Activated T-helper 2 cell treated with anti-CD3 and anti-CD28 coated beads, Interferon-gamma antibody, Interleukin-2, Interleukin-4, amounts not matched to agents 10 μg/mL and 5 μg/mL and 100 μg/mL, durations not matched to agents 14 hours and 24 hours and 36 hours (primary cell): ENCODE measurements at regions of chr13 and their contacts with region 1.

Region 1: GRCh38 chr13:44917589-44918325 is 71.5 kb downstream of the NUFIP1 start:
- DNase-seq: peak; percentile 94
- H3K4me3 Mint-ChIP-seq: no peak overlapping the region
- H3K27ac Mint-ChIP-seq: no peak overlapping the region
- H3K4me1 Mint-ChIP-seq: no peaks in the 10 kb centered on the region
- H3K27me3 Mint-ChIP-seq: no peaks in the 10 kb centered on the region

Region 2: DNA sequence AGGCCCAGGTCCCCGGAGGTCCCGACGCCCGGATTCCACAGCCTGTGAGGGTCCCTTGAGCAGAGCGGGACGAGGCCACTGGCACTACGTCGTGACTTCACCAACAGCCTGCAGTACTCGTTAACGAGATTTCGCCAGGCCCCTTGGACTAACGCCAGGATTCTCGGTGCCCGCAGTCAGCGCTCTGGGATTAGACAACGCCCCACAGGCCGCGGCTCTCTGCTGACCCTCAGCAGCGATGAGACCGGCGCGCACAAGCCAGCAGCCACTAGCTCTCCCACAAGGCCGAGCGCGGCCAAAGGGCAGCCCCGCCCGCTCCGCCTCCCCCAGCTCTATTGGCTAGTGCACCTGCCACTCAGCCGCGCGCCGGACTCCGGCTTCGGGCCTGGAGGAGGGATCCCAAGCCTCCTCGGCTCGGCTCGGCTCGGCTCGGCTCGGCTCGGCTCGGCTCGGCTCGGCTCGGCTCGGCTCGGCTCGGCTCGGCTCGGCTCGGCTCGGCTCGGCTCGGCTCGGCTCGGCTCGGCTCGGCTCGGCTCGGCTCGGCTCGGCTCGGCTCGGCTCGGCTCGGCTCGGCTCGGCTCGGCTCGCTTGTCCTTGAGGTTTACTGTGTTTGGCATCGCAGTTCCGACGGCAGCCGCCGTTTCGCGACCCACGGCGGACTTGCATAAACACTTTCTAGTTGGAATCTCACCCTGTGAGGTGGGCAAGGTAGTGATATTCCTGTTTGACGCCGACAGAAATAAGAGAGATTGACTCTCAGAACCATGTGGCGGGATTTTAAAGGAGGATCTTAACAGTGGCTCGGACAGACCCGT is 775.8 kb before region 1 on chr13:
- intact Hi-C with region 1: loop called (anchors 5 kb)
- DNase-seq: peak; percentile 93
- H3K4me3 Mint-ChIP-seq: peak overlapping the region; percentile 84
- H3K27ac Mint-ChIP-seq: peak overlapping the region; percentile 67
- H3K4me1 Mint-ChIP-seq: peaks cover 24% of the 10 kb centered on the region
- H3K27me3 Mint-ChIP-seq: peaks cover 51% of the 10 kb centered on the region

Region 3: GRCh38 chr13:44577236-44578066 is 340.3 kb before region 1 on chr13:
- intact Hi-C with region 1: loop called (anchors 1 kb)
- DNase-seq: peak; percentile 91
- H3K4me3 Mint-ChIP-seq: peak overlapping the region; percentile 88
- H3K27ac Mint-ChIP-seq: peak overlapping the region; percentile 79
- H3K4me1 Mint-ChIP-seq: peaks cover 18% of the 10 kb centered on the region
- H3K27me3 Mint-ChIP-seq: peaks cover 44% of the 10 kb centered on the region

Region 4: GRCh38 chr13:44758630-44759383 is 158.9 kb before region 1 on chr13:
- intact Hi-C with region 1: no loop called
- DNase-seq: no peak
- H3K4me3 Mint-ChIP-seq: no peak overlapping the region
- H3K27ac Mint-ChIP-seq: peak overlapping the region; percentile 13
- H3K4me1 Mint-ChIP-seq: peaks cover 22% of the 10 kb centered on the region
- H3K27me3 Mint-ChIP-seq: peaks cover 2% of the 10 kb centered on the region

Region 5: GRCh38 chr13:44815623-44816022 is 102.1 kb before region 1 on chr13:
- intact Hi-C with region 1: loop called (anchors 1 kb)
- DNase-seq: peak; percentile 10
- H3K4me3 Mint-ChIP-seq: no peak overlapping the region
- H3K27ac Mint-ChIP-seq: no peak overlapping the region
- H3K4me1 Mint-ChIP-seq: peaks cover 26% of the 10 kb centered on the region
- H3K27me3 Mint-ChIP-seq: peaks cover 45% of the 10 kb centered on the region

Region 6: DNA sequence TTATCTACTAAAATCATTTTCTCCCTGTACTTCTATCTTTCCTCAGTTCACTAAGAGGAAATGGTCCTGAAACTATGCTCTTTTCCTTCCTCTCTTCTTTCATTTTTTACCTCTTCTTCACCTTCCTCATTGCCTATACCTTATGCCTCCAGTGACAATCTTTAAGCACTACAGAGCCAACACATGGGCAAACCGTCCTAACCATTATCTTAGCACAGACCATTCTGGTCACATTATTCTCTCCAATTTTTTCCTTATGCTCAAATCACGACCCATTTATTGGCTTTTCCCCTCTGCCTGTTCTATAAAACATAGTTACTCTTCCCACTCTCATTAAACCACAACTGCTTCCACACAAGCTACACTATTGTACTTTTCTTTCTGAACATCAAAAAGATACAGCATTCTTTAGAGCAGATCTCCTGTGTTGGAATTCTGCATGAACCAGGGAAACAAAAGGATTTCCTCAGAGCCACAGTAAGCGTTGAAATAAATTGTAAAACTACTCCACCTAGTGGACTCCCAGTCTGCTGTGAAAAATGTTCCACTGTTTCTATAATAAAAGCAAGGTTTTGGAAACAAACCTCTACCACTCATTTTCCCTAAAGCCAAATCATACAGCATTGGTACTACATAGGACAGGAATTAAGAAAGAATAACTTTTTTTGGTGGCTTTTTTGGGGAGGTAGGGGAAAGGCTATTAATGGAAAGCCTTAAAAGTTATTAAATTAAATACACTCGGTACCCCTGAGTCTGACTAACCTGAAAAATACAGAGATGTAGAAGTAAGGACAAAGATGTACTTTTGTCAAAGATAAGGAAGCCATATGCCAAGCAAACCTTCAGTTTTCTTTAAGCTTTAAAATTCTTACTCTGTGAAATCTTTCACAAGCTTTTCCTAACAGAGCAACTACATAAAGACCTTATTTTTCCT is 52.1 kb after region 1 on chr13:
- intact Hi-C with region 1: loop called (anchors 1 kb)
- DNase-seq: no peak
- H3K4me3 Mint-ChIP-seq: no peak overlapping the region
- H3K27ac Mint-ChIP-seq: no peak overlapping the region
- H3K4me1 Mint-ChIP-seq: peaks cover 8% of the 10 kb centered on the region
- H3K27me3 Mint-ChIP-seq: no peaks in the 10 kb centered on the region

Region 7: DNA sequence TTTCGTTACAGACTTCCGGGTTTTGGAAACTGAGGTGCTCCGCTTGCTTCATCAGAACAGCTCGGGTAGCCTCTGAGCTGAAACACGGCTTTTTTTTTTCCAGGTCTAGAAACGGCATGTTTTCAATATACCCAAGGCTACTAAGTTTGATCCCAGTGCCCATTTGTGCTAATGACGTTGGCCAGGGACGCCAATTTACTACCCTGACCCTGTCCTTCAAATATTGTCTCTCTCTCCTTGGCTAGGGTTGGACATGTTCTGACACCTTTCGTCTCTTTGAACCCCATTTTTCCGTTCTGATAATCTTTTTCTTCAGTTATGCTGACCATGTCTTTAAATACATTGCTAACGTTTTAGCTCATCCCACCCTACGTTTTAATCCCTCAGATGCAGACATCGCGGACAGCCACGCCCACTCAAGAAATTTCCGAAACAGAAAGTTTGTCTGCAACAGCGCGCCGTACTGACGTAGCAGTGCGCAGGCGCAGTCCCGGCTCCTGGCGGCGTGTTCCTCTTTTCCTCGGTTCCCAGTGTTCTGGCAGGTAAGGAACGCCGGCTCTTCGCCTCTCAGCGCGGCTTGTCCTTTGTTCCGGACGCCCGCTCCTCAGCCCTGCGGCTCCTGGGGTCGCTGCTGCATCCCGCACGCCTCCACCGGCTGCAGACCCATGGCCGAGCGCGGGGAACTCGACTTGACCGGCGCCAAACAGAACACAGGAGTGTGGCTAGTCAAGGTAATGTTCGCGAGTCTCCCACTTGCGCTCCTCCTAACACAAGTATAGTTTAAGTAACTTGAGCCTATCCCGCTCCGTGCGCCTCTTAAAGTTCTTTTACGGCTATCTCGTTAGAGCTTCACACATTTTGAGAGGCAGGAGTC is 202.5 kb after region 1 on chr13 and contains the start of gene GTF2F2:
- intact Hi-C with region 1: loop called (anchors 10 kb)
- DNase-seq: peak; percentile 84
- H3K4me3 Mint-ChIP-seq: no peak within 1 kb of the TSS
- H3K27ac Mint-ChIP-seq: no peak within 1 kb of the TSS
- H3K4me1 Mint-ChIP-seq: peaks cover 8% of the 10 kb centered on the region
- H3K27me3 Mint-ChIP-seq: no peaks in the 10 kb centered on the region
- total RNA-seq, gene GTF2F2: 26.9 and 28.9 TPM in 2 replicates